Endothelial cell of umbilical vein (primary cell): ENCODE measurements at regions of chr9 and their contacts with region 1.

Region 1: GRCh38 chr9:111621895-111622480 is 9.1 kb upstream of the DNAJC25 start:
- DNase-seq: peak; percentile 68
- H3K4me3 ChIP-seq: no peak overlapping the region
- H3K27ac ChIP-seq: no peak overlapping the region
- H3K4me1 ChIP-seq: peaks cover 4% of the 10 kb centered on the region
- H3K27me3 ChIP-seq: no peaks in the 10 kb centered on the region
- CTCF ChIP-seq: peak; percentile 77 to 91
- POLR2A ChIP-seq: no peak

Region 2: GRCh38 chr9:111605041-111605559 is 16.9 kb before region 1 on chr9:
- CTCF ChIA-PET with region 1: interaction called, 221 read pairs
- POLR2A ChIA-PET with region 1: no interaction called
- dilution Hi-C with region 1: no loop called
- intact Hi-C with region 1: no loop called
- DNase-seq: no peak
- H3K4me3 ChIP-seq: no peak overlapping the region
- H3K27ac ChIP-seq: no peak overlapping the region
- H3K4me1 ChIP-seq: peaks cover 25% of the 10 kb centered on the region
- H3K27me3 ChIP-seq: no peaks in the 10 kb centered on the region
- CTCF ChIP-seq: no peak
- POLR2A ChIP-seq: no peak

Region 3: DNA sequence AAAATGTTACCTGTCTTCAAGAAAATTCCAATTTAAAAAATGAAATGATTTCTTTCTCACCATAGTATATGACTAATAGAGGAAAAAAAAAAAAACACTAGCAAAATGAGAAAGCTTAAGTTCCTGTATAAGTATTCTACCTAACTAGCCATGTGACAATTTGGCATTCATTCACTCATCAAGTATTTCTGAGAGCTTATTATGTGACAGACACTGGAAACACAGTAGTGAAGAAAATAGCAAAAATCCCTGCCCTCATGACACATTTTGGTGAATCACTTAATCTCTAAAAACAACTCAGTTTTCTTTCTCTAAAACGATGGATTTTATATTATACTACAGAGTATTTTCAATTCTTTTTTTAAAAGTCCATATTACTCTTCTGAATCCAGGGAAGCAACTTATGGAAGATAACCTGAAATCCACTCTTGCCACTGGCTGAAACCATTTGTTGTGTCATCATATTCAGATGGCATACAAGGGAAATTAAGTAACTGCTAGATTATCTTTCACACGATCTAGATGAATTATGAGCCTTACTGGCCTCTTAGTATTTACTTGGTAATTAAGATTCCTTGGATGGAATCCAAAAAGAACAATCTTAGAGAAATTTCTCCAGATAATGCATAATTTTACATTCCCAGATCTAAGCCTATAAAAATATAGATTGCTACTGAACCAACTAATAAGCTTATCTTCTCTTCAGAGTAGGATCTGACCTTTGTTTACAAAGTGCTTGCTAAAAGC is 705.9 kb after region 1 on chr9:
- CTCF ChIA-PET with region 1: no interaction called
- POLR2A ChIA-PET with region 1: no interaction called
- dilution Hi-C with region 1: no loop called
- intact Hi-C with region 1: no loop called
- DNase-seq: peak; percentile 46
- H3K4me3 ChIP-seq: no peak overlapping the region
- H3K27ac ChIP-seq: no peak overlapping the region
- H3K4me1 ChIP-seq: peaks cover 20% of the 10 kb centered on the region
- H3K27me3 ChIP-seq: no peaks in the 10 kb centered on the region
- CTCF ChIP-seq: no peak
- POLR2A ChIP-seq: no peak